ENCODE measurements at regions of chr13 and their contacts with region 1.

Region 1: GRCh38 chr13:21476893-21477472 is 17.9 kb upstream of the ZDHHC20 start:
- DNase-seq: peak; percentile 88
- ATAC-seq: peak; percentile 89
- H3K4me3 Mint-ChIP-seq: peak overlapping the region; percentile 68
- H3K27ac Mint-ChIP-seq: peak overlapping the region; percentile 26
- H3K4me1 Mint-ChIP-seq: peaks cover 15% of the 10 kb centered on the region
- H3K27me3 Mint-ChIP-seq: peaks cover 2% of the 10 kb centered on the region

Region 2: GRCh38 chr13:20990910-20991525 is 486.0 kb before region 1 on chr13:
- CTCF ChIA-PET with region 1: no interaction called
- POLR2A ChIA-PET with region 1: no interaction called
- DNase-seq: no peak
- ATAC-seq: no peak
- H3K4me3 Mint-ChIP-seq: no peak overlapping the region
- H3K27ac Mint-ChIP-seq: no peak overlapping the region
- H3K4me1 Mint-ChIP-seq: peaks cover 2% of the 10 kb centered on the region
- H3K27me3 Mint-ChIP-seq: peaks cover 3% of the 10 kb centered on the region

Region 3: DNA sequence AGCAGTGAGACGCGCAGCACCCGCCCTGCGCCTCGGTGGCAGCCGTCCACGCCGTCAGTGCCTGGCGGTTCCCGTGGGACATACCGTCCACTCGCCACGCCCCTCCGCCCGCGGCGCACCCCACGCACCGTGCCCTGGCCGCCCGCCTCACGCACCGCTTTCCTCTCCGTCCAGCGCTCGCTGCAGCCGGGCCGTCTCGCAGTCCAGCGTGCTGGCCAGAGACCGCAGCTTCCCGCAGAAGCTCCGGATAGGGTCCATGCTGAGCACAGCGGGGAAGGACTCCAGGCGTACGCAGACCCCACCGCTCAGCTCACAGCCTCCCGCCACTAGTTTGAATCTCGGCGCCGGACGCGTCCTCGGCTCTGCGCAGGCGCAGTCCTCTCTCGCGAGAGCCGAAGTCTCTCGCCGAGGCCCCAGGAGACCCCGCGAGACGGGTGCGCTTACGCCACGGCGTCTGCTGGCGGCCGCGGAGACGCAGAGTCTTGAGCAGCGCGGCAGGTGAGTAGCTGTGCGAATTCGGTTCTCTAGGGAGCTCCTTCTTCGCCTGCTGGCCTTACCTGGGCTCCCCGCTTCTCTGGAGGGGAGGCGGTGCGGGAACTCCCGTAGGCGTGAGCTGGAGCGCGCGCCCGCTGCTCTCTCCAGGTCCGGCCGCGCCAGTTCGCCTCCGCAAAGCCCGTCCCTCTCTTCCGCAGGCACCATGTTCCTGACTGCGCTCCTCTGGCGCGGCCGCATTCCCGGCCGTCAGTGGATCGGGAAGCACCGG is 300.6 kb before region 1 on chr13 and contains the starts of genes MRPL57 and SKA3:
- CTCF ChIA-PET with region 1: interaction called, 12 read pairs
- POLR2A ChIA-PET with region 1: interaction called, 3 read pairs
- DNase-seq: peak; percentile 95
- ATAC-seq: peak; percentile 94
- H3K4me3 Mint-ChIP-seq: peak within 1 kb of the TSS; percentile 98
- H3K27ac Mint-ChIP-seq: peak within 1 kb of the TSS; percentile 97
- H3K4me1 Mint-ChIP-seq: peaks cover 31% of the 10 kb centered on the region
- H3K27me3 Mint-ChIP-seq: no peaks in the 10 kb centered on the region
- total RNA-seq, gene MRPL57: 22.5 to 24.0 TPM
- total RNA-seq, gene SKA3: 51.0 to 52.5 TPM

Region 4: GRCh38 chr13:21344662-21345176 is 132.3 kb before region 1 on chr13:
- CTCF ChIA-PET with region 1: interaction called, 11 read pairs
- POLR2A ChIA-PET with region 1: no interaction called
- DNase-seq: peak; percentile 77
- ATAC-seq: peak; percentile 85
- H3K4me3 Mint-ChIP-seq: peak overlapping the region; percentile 75
- H3K27ac Mint-ChIP-seq: peak overlapping the region; percentile 91
- H3K4me1 Mint-ChIP-seq: peaks cover 28% of the 10 kb centered on the region
- H3K27me3 Mint-ChIP-seq: no peaks in the 10 kb centered on the region

Region 5: DNA sequence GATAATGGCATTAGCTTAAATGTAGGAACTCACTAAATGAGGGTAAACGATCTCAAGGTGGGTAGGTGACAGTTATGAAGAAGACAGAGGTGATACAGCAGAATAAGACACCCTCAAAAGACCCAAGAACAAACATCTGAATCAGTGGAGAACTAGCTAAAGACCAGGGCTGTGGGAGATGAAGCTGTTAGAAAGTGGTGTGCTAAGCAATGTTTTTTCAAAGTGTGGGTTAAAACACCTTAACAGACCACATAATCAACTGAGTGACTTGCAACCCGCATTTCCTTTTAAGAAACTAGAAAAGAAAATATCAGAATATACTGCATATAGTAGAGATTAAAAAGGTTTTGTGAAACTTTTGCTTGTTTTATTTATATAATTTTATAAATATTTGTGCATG is 87.9 kb before region 1 on chr13:
- CTCF ChIA-PET with region 1: interaction called, 20 read pairs
- POLR2A ChIA-PET with region 1: no interaction called
- DNase-seq: no peak
- ATAC-seq: peak; percentile 55
- H3K4me3 Mint-ChIP-seq: no peak overlapping the region
- H3K27ac Mint-ChIP-seq: peak overlapping the region; percentile 74
- H3K4me1 Mint-ChIP-seq: peaks cover 17% of the 10 kb centered on the region
- H3K27me3 Mint-ChIP-seq: no peaks in the 10 kb centered on the region

Region 6: DNA sequence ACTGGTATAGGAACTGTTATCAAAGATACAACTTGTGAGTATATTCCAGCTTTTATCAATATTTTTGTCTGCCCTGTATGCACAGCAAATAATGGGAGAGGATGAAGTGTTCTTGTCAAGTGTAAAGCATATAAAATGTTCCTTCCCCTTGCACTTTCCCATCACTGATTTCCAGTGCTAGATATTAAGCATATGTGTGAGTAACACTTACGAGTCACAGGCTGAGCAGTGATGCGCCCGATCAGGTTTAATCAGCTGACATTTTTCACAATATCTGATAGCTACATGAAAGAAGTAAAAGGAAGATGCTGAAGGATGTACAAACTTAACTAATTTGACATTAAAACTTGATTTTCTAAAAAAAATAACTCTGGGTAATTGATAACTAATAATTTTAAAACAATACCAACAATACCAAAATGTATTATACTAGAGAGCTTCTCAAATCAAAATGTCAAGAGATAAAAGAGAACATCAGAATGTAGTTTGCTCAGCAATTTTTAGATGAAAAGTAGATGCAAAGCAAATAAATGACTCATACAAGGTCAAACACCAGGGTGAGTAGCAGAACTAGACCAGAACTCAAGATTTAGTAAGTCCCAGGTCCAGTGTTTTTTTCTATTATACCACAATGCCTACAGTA is 74.3 kb before region 1 on chr13:
- CTCF ChIA-PET with region 1: interaction called, 11 read pairs
- POLR2A ChIA-PET with region 1: no interaction called
- DNase-seq: no peak
- ATAC-seq: no peak
- H3K4me3 Mint-ChIP-seq: no peak overlapping the region
- H3K27ac Mint-ChIP-seq: peak overlapping the region; percentile 2
- H3K4me1 Mint-ChIP-seq: peaks cover 39% of the 10 kb centered on the region
- H3K27me3 Mint-ChIP-seq: no peaks in the 10 kb centered on the region

Region 7: DNA sequence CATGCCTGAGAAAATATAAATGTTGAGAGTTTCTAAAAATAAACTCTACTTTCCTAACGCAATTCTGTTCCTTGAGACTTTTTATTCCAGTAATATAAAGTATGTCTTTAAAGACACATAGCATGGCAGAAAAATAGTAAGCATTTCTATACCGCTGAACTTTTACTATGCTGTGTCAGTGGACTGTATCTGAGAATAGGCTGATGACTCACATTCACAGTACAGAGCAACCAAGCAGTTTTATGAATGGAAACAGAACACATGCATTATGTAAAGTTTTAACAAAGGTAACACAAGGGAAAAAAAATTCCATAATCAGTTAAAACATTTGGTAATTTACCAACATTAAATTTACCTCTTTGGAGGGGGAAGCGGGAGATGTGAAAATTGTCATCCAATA is 56.3 kb before region 1 on chr13:
- CTCF ChIA-PET with region 1: interaction called, 10 read pairs
- POLR2A ChIA-PET with region 1: no interaction called
- DNase-seq: no peak
- ATAC-seq: no peak
- H3K4me3 Mint-ChIP-seq: no peak overlapping the region
- H3K27ac Mint-ChIP-seq: no peak overlapping the region
- H3K4me1 Mint-ChIP-seq: no peaks in the 10 kb centered on the region
- H3K27me3 Mint-ChIP-seq: no peaks in the 10 kb centered on the region

Region 8: DNA sequence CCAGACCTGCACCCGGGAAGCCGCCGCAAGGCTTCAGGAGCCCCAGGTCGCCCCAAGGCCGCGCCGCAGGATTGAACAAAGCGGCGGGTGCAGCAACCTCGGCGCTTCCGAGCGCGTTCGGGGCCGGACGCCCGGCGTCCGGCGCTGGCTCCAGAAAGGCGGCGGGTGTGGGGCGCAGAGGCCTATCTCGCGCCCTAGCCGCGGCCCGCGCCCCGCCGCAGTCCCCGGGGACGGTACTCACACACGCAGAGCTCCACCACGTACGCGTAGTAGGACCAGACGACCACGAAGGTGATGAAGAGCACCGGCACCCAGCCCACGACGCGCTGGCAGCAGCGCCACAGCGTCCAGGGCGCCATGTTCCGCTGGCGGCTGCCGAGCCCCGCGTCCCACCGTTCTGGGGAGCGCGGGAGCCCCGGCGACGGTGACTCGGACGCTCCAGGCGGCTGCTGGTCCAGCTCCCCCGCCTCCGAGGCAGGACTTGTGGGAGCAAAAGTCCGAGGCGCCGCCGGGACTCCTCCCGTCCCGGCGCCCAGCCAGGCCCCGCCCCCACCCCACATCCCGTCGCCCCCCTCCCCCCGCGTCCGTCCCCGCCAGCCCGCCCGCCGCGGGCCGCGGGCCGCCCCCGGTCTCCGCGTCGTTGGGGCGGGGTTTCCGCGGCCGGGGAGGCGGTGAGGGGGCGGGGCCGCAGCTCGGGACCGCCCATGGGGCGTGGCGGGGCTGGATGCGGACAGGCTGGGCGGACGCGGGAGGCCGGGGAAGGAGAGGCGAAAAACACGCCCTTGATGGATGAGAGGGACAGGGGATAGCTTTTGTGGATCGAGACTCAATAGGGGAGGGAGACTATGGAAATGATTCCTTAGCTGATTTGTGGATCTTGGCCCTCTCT is 17.9 kb before region 1 on chr13 and contains the start of gene ZDHHC20:
- CTCF ChIA-PET with region 1: interaction called, 35 read pairs
- POLR2A ChIA-PET with region 1: interaction called, 4 read pairs
- DNase-seq: peak; percentile 89
- ATAC-seq: peak; percentile 87
- H3K4me3 Mint-ChIP-seq: peak within 1 kb of the TSS; percentile 96
- H3K27ac Mint-ChIP-seq: peak within 1 kb of the TSS; percentile 96
- H3K4me1 Mint-ChIP-seq: peaks cover 31% of the 10 kb centered on the region
- H3K27me3 Mint-ChIP-seq: no peaks in the 10 kb centered on the region
- total RNA-seq, gene ZDHHC20: 98.2 to 106 TPM